ENCODE measurements at regions of chr10 and their contacts with region 1.

Region 1: DNA sequence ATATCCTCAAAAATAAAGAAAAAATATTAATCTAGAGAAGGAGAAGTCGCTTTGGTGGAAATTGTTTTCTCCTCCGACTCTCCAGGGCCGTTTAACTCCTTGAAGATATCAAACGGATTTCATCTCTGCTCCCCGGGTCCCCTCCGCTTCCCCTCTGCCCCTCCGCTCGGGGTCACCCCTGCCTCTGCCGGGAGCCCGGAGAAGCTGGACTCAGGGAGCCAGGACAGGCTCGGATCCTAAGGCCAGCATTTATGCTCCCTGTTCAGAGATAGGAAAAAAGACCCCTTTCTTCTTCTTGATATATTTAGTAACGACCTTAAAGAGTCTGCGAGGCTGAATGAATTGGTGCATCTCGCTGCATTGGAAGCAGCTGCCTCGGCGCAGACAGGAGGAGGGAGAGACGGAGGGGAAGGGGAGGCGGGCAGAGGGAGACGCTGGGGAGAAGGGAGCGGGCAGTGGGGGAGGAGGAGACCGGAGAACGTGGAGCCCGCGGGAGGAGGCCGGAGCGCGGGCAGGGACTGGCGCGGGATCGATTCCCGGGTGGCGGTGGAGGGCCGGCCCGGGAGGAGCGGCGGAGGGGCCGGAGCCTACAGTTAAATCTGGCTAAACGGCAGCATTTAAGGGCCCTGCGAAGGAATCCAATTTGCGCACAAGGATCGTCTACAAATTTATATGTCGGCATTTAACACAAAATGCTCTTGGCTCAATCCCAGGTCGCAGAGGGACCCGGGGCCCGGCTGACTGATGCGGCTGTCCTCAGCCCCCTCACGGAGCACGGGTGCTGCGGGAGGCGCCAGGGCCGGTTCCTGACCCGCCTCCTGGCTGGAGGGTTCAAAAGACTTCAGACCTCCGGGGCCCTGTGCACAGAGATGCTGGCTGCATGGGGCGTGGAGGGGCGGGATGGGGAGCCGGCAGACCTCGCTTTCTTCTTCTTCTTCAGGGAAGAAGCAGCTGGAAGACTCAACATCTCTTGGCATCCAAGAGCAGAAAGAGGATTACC is 55.6 kb downstream of the CRTAC1 start:
- DNase-seq: no peak
- H3K4me3 ChIP-seq: no peak overlapping the region
- H3K27ac ChIP-seq: no peak overlapping the region
- H3K4me1 ChIP-seq: no peaks in the 10 kb centered on the region
- H3K27me3 ChIP-seq: peaks cover 15% of the 10 kb centered on the region
- CTCF ChIP-seq: no peak

Region 2: DNA sequence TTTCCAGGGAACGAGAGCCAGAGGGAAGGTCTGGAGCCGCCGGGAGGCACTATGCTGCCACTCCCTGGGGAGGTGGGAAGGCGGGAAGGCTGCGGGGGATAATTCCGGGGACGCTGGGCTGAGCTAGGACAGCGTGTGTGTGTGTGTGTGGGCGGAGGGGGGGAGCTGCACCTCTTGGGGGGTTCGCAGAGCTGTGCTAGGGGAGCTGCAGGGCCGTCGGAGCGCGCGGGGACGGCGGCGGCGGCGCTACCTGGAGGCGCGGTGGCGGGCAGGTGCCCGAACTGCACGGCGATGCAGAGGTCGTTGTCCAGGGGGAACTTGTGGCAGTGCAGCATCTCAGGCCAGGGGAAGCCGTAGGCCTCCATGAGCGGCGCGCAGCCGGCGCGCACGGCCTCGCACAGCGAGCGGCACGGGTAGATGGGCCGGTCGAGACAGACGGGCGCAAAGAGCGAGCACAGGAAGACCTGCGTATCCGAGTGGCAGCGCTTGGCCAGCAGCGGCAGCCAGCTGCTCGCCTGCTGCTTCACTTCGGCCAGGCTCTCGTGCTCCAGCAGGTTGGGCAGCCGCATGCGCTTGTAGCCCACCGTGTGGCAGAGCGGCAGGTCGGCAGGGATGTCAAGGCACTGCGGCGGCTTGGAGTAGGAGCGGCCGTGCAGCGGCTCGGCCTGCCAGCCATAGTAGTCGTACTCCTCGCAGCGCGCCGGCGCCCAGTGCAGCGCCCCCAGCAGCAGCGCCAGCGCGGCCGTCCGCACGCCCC is 203.6 kb before region 1 on chr10:
- CTCF ChIA-PET with region 1: no interaction called
- dilution Hi-C with region 1: loop called (anchors 10 kb)
- in situ Hi-C with region 1: no loop called
- intact Hi-C with region 1: no loop called
- DNase-seq: peak; percentile 55
- H3K4me3 ChIP-seq: peak overlapping the region in 2 of 3 experiments; percentile 28 to 29
- H3K27ac ChIP-seq: no peak overlapping the region
- H3K4me1 ChIP-seq: peaks cover 2% of the 10 kb centered on the region
- H3K27me3 ChIP-seq: peaks cover 17% of the 10 kb centered on the region
- CTCF ChIP-seq: no peak

Region 3: DNA sequence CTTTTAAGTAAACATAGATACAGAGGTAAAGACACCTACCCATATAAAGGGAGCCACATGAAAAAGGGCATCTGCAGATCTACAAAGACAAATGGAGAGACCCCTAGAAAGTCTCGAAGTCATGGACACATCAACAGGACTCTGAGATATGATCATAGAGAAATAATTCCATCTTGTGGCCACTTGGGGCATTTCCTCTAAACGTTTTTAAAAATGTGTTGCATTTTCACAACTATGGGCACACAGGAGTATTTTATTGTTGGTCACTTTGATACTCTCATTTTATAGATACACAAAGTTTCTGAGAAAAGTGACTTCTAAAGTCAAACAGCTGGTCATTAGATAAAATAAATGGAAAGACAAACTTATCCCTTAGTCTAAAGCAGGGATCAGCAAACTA is 31.5 kb before region 1 on chr10:
- CTCF ChIA-PET with region 1: no interaction called
- dilution Hi-C with region 1: loop called (anchors 5 kb)
- in situ Hi-C with region 1: no loop called
- intact Hi-C with region 1: no loop called
- DNase-seq: no peak
- H3K4me3 ChIP-seq: no peak overlapping the region
- H3K27ac ChIP-seq: no peak overlapping the region
- H3K4me1 ChIP-seq: no peaks in the 10 kb centered on the region
- H3K27me3 ChIP-seq: no peaks in the 10 kb centered on the region
- CTCF ChIP-seq: peak in 1 of 2 donors; percentile 9

Region 4: DNA sequence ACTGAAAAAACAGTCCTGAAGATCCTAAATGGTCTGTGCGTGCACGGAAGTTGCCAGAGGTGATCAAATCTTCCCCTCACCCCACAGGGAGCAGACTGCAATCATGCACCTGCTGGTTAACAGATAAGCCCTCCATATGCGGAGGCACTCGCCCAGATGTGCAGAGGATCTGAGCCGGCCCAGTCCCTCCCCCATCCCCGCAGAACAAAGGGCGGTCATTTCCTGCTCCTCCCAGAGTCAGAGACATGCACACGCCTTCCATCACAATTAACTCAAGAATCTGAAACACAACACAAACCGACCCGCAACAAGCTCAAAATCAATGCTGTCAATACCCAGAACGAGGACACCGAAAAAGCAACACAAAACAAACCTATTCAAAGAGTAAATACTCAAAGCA is 31.4 kb after region 1 on chr10:
- CTCF ChIA-PET with region 1: no interaction called
- dilution Hi-C with region 1: no loop called
- in situ Hi-C with region 1: no loop called
- intact Hi-C with region 1: no loop called
- DNase-seq: no peak
- H3K4me3 ChIP-seq: no peak overlapping the region
- H3K27ac ChIP-seq: no peak overlapping the region
- H3K4me1 ChIP-seq: no peaks in the 10 kb centered on the region
- H3K27me3 ChIP-seq: peaks cover 3% of the 10 kb centered on the region
- CTCF ChIP-seq: no peak

Measured in mammary epithelial cell (primary cell).